SK-N-SH (cell line): ENCODE measurements at regions of chr7 and their contacts with region 1.

Region 1: GRCh38 chr7:73738612-73739374 is at the start of gene ABHD11:
- DNase-seq: peak; percentile 100
- H3K4me3 ChIP-seq: peak within 1 kb of the TSS; percentile 76 to 93
- H3K27ac ChIP-seq: peak within 1 kb of the TSS; percentile 82 to 87
- H3K4me1 ChIP-seq: peaks cover 7 to 13% of the 10 kb centered on the region in 2 experiments; a peak in 2 of 4 replicates
- H3K27me3 ChIP-seq: no peaks in the 10 kb centered on the region
- CTCF ChIP-seq: no peak; the same call in 1 of the 2 replicates
- EP300 ChIP-seq: no peak; a peak in 1 of 4 replicates
- RAD21 ChIP-seq: no peak
- polyA plus RNA-seq, gene ABHD11: 29.9 and 33.7 TPM in 2 replicates

Region 2: DNA sequence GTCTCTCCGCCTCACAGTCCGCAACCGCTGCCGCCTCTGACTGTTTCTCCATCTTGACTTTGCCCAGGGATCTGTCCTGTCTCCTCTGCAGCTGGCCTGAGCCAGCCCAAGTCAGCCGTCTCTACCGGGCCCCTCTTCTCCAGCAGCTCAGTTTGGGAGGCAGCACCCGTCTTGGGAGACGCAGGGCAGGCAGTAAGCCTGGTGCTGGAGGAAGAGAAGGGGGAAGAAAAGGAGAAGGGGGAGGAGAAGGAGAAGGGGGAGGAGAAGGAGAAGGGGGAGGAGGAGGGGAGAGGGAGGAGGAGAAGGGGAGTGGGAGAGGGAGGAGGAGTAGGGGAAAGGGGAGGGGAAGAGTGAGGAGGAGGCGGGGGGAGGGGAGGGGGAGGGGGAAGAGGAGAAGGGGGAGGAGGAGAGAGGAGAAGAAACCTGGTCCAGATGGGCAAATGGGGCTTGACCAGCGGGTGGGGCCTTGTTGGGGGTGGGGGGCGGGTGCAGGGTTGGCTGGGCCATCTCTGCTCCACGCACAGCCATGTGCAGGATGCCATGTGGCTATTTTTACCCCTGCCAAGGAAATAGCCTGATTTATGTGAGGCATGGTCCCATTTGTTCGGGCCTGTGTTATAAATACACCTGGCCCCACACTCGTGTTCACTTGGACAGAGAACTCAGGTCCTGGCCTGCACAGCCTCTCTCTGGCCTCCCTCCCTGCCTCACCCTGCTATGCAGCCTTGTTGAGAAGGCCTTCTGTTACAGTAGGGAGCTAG is 341.1 kb before region 1 on chr7:
- CTCF ChIA-PET with region 1: no interaction called
- POLR2A ChIA-PET with region 1: no interaction called
- DNase-seq: no peak
- H3K4me3 ChIP-seq: no peak overlapping the region
- H3K27ac ChIP-seq: no peak overlapping the region
- H3K4me1 ChIP-seq: no peaks in the 10 kb centered on the region
- H3K27me3 ChIP-seq: 0 out of 2 replicates have a peak, but pooled peaks cover 11% of the 10 kb centered on the region
- CTCF ChIP-seq: no peak
- EP300 ChIP-seq: no peak
- RAD21 ChIP-seq: no peak

Region 3: DNA sequence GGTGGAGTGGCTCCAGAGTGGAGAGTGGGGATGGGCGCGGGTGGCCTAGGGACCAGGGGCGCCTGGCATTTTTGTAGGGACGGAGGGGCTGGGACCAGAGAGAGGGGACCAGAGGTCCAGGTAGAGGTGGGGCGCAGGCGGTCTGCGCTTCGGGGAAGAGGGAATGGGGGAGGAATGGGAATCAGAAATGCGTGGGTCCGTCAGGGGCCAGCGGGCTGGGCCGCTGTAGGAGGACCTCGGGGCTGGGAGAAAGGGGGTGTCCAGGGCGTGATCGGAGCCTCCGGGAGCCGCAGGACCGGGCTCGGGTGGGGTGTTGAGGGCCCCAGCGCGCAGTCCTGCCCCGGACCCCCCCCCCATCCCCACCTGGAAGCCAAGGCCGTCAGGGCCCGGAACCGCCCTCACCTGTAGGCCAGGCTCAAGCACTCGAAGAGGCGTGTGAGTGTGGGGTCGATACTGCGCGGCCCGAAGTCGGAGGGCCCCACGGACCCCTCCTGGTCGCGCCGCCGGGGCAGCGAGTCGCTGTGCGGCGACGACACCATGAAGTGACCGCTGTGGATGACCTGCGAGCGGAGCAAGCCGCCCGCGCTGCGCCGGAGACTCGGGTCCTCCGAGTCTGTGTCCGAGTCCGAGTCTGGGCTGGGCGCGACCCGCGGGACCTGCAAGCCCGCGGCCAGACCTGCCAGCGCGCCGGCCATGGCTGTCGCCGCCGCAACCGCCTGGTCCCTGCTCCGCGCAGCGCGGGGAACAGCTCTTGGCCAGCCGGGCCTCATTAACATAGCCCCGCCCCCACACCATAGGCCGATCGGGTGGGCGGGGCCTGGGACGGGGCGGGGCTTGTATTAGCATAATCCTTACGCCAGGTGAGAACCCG is 114.8 kb before region 1 on chr7 and contains the start of gene MLXIPL:
- CTCF ChIA-PET with region 1: interaction called, 12 read pairs
- POLR2A ChIA-PET with region 1: no interaction called
- DNase-seq: peak; percentile 100
- H3K4me3 ChIP-seq: peak within 1 kb of the TSS; percentile 48 to 61
- H3K27ac ChIP-seq: no peak within 1 kb of the TSS
- H3K4me1 ChIP-seq: no peaks in the 10 kb centered on the region; a peak in 1 of 4 replicates
- H3K27me3 ChIP-seq: peaks cover 50% of the 10 kb centered on the region
- CTCF ChIP-seq: no peak
- EP300 ChIP-seq: no peak
- RAD21 ChIP-seq: no peak
- polyA plus RNA-seq, gene MLXIPL: 0.21 and 0.32 TPM in 2 replicates

Region 4: GRCh38 chr7:73667344-73668102 is 71.3 kb before region 1 on chr7 and contains the start of gene VPS37D:
- CTCF ChIA-PET with region 1: interaction called, 30 read pairs
- POLR2A ChIA-PET with region 1: interaction called, 5 read pairs
- DNase-seq: peak; percentile 100
- H3K4me3 ChIP-seq: peak within 1 kb of the TSS; percentile 70 to 75
- H3K27ac ChIP-seq: peak within 1 kb of the TSS in 1 of 2 experiments; percentile 22; a peak in 1 of 4 replicates
- H3K4me1 ChIP-seq: peaks cover 0 to 8% of the 10 kb centered on the region in 2 experiments; a peak in 1 of 4 replicates
- H3K27me3 ChIP-seq: 0 out of 2 replicates have a peak, but pooled peaks cover 6% of the 10 kb centered on the region
- CTCF ChIP-seq: peak; percentile 70
- EP300 ChIP-seq: peak in 1 of 2 experiments; percentile 27; a peak in 2 of 4 replicates
- RAD21 ChIP-seq: peak; percentile 64
- polyA plus RNA-seq, gene VPS37D: 5.7 and 7.4 TPM in 2 replicates

Region 5: GRCh38 chr7:73712773-73713172 is 26.0 kb before region 1 on chr7:
- CTCF ChIA-PET with region 1: interaction called, 15 read pairs
- POLR2A ChIA-PET with region 1: interaction called, 3 read pairs
- DNase-seq: no peak
- H3K4me3 ChIP-seq: no peak overlapping the region
- H3K27ac ChIP-seq: 0 out of 4 replicates have a peak overlapping the region, but pooled peaks of 1 of the 2 experiments have one; percentile 0
- H3K4me1 ChIP-seq: peaks cover under 1 to 49% of the 10 kb centered on the region in 2 experiments; a peak in 3 of 4 replicates
- H3K27me3 ChIP-seq: no peaks in the 10 kb centered on the region
- CTCF ChIP-seq: no peak
- EP300 ChIP-seq: no peak
- RAD21 ChIP-seq: no peak

Region 6: GRCh38 chr7:73858807-73859206 is 120.0 kb after region 1 on chr7:
- CTCF ChIA-PET with region 1: interaction called, 52 read pairs
- POLR2A ChIA-PET with region 1: interaction called, 3 read pairs
- DNase-seq: no peak
- H3K4me3 ChIP-seq: no peak overlapping the region
- H3K27ac ChIP-seq: no peak overlapping the region
- H3K4me1 ChIP-seq: no peaks in the 10 kb centered on the region; a peak in 1 of 4 replicates
- H3K27me3 ChIP-seq: no peaks in the 10 kb centered on the region
- CTCF ChIP-seq: no peak
- EP300 ChIP-seq: no peak
- RAD21 ChIP-seq: no peak